Kidney (tissue), 22 donors: ENCODE measurements at regions of chr1 and their contacts with region 1.

Region 1: GRCh38 chr1:224513787-224514209 is 79.2 kb upstream of the WDR26 start:
- DNase-seq: peak; percentile 91 to 95 (median 93)
- H3K4me3 ChIP-seq: no peak overlapping the region
- H3K27ac ChIP-seq: no peak overlapping the region
- H3K4me1 ChIP-seq: peaks cover 0 to 3% (median 0%) of the 10 kb centered on the region in 3 donors
- H3K27me3 ChIP-seq: no peaks in the 10 kb centered on the region
- CTCF ChIP-seq: peak; percentile 94

Region 2: GRCh38 chr1:224914292-224914900 is 400.6 kb after region 1 on chr1:
- intact Hi-C with region 1: loop called (anchors 10 kb)
- DNase-seq: no peak
- H3K4me3 ChIP-seq: no peak overlapping the region
- H3K27ac ChIP-seq: no peak overlapping the region
- H3K4me1 ChIP-seq: no peaks in the 10 kb centered on the region
- H3K27me3 ChIP-seq: no peaks in the 10 kb centered on the region
- CTCF ChIP-seq: no peak